Esophagus muscularis mucosa (tissue), 4 donors: ENCODE measurements at regions of chr1 and their contacts with region 1.

Region 1: DNA sequence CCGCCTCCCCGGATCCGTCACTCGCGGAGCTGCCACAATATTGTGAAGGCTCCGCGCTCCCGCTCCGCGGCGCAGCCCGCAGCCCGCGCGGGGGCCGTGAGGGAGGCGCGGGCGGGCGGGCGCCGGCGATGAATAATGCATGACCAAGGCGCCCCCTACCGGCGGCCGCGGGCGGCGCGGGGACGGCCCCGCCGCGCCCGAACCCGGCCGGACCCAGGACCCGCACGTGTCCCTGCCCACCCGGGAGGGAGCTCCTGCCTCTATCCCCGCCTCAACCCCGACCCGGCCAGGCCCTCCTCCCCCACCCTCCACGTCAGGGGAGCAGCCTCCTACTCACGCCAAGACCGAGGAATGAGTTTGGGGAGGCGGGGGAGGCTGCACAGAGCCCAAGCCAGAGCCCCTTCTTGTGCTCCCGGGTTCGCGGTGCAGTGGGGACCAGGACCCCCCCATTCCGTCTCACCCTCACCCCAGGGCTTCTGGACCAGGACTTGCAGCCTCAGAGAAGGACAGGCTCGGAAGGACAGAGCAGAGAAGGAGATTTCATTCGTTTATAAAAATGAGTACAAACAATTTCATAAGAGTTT is 70.8 kb upstream of the CASZ1 start:
- DNase-seq: no peak
- H3K4me3 ChIP-seq: peak overlapping the region; percentile 56 to 68 (median 60)
- H3K27ac ChIP-seq: no peak overlapping the region
- H3K4me1 ChIP-seq: peaks cover 22 to 31% (median 27%) of the 10 kb centered on the region in 4 donors
- H3K27me3 ChIP-seq: peaks cover 0 to 40% (median 3%) of the 10 kb centered on the region in 4 donors
- CTCF ChIP-seq: peak; percentile 88 to 93 (median 89)
- EP300 ChIP-seq: no peak
- POLR2A ChIP-seq: no peak

Region 2: GRCh38 chr1:10510520-10511493 is 356.4 kb before region 1 on chr1:
- intact Hi-C with region 1: loop called (anchors 5 kb)
- DNase-seq: no peak
- H3K4me3 ChIP-seq: no peak overlapping the region
- H3K27ac ChIP-seq: peak overlapping the region in 2 of 4 donors; percentile 16 to 23
- H3K4me1 ChIP-seq: peaks cover 25 to 74% (median 62%) of the 10 kb centered on the region in 4 donors
- H3K27me3 ChIP-seq: no peaks in the 10 kb centered on the region
- CTCF ChIP-seq: no peak
- EP300 ChIP-seq: no peak
- POLR2A ChIP-seq: no peak

Region 3: DNA sequence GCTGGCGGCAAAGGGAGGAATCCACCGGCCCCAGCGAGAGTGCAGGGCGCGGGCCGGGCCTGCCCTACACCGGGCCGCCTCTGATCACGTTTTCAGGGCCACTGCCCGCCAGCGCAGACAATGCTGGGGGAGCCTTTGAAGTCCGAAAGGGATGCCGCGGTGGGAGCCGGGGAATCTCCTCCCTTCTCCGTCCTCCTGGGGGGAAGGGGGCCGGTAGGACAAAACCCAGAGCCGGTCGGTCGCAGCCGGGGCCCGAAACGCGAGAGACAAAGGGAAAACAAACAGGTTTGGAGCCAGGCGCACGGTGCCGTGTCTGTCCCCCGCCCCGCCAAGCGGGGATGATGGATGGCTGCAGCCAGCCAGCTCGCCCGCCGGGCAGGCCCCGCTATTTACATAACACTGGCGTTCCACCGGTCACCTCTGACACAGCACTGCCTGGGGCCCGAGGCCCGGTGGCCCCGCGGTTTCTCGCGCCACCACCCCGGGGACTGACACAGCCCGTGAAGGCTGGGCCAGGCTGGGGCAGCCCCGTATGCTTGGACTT is 162.8 kb before region 1 on chr1:
- intact Hi-C with region 1: loop called (anchors 10 kb)
- DNase-seq: no peak
- H3K4me3 ChIP-seq: peak overlapping the region; percentile 35 to 38 (median 37)
- H3K27ac ChIP-seq: peak overlapping the region in 2 of 4 donors; percentile 9 to 28
- H3K4me1 ChIP-seq: peaks cover 15 to 18% (median 16%) of the 10 kb centered on the region in 4 donors
- H3K27me3 ChIP-seq: peaks cover 0 to 8% (median 0%) of the 10 kb centered on the region in 4 donors
- CTCF ChIP-seq: no peak
- EP300 ChIP-seq: no peak
- POLR2A ChIP-seq: no peak

Region 4: DNA sequence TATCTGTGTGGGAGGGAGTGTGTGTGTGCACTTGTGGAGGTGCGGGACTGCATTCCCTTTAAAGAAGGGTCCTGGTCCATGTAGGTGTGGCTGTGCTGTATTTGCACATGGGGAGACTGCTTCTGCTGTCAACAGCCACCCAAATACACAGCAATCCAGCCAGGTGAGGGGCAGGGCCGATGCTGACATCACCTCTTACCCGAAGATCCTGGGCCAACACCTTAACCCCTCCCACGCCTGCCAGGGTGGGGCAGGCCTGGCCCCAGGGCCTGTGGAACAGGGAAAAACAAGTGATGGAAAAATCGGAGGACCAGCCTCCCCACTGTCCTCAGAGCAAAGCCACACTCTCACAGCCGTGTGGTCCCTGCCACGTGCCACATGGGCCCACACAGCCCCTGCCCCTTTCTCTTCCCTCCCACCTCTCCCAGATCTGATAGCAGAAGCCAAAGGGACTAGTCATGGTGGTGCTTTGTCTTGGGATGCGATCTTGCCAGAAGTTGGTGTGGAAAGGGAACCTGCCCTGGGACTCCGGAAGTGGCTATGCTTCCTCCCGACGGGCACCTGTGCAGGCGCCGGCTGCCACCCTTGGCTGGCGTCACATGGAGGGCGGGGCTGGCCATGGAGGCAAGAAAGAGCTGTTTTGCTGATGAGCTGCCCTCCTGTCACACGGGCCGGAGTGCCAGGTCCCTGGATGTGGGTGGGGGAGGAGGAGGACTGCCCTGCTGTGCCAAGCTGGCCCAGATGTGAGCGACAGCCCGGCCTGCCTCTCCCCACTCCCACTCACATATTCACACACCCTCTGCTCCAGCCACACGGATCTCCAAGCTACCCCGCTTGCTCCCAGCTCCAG is 63.0 kb before region 1 on chr1:
- intact Hi-C with region 1: loop called (anchors 5 kb)
- DNase-seq: no peak
- H3K4me3 ChIP-seq: no peak overlapping the region
- H3K27ac ChIP-seq: no peak overlapping the region
- H3K4me1 ChIP-seq: no peaks in the 10 kb centered on the region
- H3K27me3 ChIP-seq: peaks cover 0 to 47% (median 0%) of the 10 kb centered on the region in 4 donors
- CTCF ChIP-seq: no peak
- EP300 ChIP-seq: no peak
- POLR2A ChIP-seq: no peak